ENCODE measurements at regions of chr19 and their contacts with region 1.

Region 1: DNA sequence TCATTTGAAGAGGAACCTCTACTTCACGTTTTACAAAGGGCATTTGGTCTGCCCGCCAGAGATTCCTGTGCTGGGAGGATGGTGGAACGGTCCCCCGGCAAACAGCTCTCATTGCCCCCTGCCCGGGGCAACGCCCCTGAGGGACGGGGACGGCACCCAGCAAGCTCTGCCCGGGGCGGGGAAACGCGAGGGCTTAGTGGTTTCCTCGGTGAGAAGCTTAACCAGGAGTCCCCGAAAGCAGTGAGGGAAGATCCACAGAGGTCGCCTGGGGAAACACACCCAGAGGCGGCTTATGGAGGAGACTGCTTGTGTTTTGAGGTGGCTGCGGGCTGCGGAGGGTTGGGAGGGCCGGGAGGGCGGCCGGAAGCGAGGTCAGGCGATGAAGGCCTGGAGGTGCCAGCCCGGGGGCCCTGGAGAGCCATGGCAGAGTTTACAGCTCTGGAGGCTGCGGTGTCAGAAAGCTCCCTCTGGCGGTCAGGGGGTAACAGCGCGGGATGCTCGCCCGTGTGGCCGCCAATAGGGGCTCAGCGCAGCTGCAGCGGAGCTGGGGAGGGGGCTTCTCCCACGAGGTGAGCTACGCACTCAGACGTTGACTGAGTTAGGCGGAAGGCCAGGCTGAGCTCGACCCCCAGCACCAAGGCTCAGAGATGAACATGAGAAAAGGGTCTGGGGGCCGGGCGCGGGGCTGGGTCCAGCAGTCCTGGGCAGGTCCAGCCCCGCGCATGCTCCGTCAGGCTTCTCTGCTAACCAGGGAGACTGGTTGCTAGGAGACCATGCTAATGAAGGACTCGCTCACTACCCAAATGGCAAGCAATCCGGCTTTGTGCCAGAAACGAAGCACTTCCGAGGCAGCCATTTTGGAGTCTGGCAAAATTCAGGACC is 652 bp upstream of the TPGS1 start:
- DNase-seq: peak; percentile 84
- ATAC-seq: peak; percentile 82
- H3K4me3 ChIP-seq: peak overlapping the region; percentile 65
- H3K27ac ChIP-seq: peak overlapping the region; percentile 80
- H3K4me1 ChIP-seq: peaks cover 12% of the 10 kb centered on the region
- H3K27me3 ChIP-seq: no peaks in the 10 kb centered on the region
- CTCF ChIP-seq: peak; percentile 99
- POLR2A ChIP-seq: no peak
- RAD21 ChIP-seq: peak; percentile 68

Region 2: DNA sequence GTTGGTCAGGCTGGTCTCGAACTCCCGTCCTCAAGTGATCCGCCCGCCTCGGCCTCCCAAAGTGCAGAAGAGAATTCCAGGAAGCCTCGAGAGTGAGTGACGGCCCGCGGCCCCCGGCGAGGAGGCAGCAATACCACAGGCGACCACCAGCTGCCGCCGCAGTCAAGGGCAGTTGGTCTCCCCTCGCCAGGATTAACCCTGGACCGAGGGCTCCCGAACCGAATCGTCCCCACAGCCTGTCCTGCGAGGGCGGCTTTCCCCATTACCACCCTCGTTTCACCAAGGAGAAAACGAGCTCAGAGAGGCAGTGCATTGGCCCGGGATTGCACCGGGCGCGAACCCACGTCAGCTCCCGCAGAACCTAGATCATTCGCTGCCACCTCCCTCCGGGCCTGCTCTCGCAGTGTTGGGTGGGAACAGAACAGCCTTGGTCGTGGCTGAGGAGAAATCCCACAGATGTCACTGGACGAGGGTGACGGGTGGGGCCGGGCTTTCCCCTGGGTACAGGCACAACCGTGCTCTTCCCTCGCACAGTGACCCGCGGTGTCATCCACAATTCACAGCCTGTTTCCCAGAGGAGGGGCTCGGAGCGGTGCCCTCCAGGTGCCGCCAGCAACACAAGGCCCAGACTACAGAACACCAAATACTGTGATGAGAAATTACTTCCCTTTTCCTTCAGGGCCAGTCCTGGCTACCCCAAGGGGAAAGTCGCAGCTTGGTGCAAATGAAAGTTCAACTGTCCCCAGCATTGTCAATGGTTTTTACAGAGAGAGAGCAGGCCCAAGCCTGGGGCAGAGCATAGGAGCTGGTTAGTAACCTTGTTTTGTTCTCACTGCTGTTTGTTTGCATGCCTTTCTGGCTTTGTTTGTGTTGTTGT is 122.5 kb before region 1 on chr19:
- CTCF ChIA-PET with region 1: no interaction called
- POLR2A ChIA-PET with region 1: no interaction called
- dilution Hi-C with region 1: no loop called
- in situ Hi-C with region 1: no loop called
- intact Hi-C with region 1: loop called (anchors 5 kb)
- DNase-seq: no peak
- ATAC-seq: peak; percentile 86
- H3K4me3 ChIP-seq: no peak overlapping the region
- H3K27ac ChIP-seq: no peak overlapping the region
- H3K4me1 ChIP-seq: peaks cover 2% of the 10 kb centered on the region; the same call in 1 of the 2 replicates
- H3K27me3 ChIP-seq: peaks cover 11% of the 10 kb centered on the region
- CTCF ChIP-seq: peak; percentile 45
- POLR2A ChIP-seq: no peak
- RAD21 ChIP-seq: peak; percentile 46

Region 3: GRCh38 chr19:531009-531752 is 24.5 kb after region 1 on chr19:
- CTCF ChIA-PET with region 1: interaction called, 11 read pairs
- POLR2A ChIA-PET with region 1: interaction called, 3 read pairs
- dilution Hi-C with region 1: no loop called
- in situ Hi-C with region 1: no loop called
- intact Hi-C with region 1: loop called (anchors 2 kb)
- DNase-seq: peak; percentile 76
- ATAC-seq: peak; percentile 82
- H3K4me3 ChIP-seq: peak overlapping the region; percentile 94
- H3K27ac ChIP-seq: peak overlapping the region; percentile 93
- H3K4me1 ChIP-seq: peaks cover 8% of the 10 kb centered on the region
- H3K27me3 ChIP-seq: peaks cover 2% of the 10 kb centered on the region; the same call in 1 of the 2 replicates
- CTCF ChIP-seq: 0 out of 2 replicates have a peak, but pooled peaks have one; percentile 8
- POLR2A ChIP-seq: no peak
- RAD21 ChIP-seq: no peak